ENCODE measurements at regions of chr4 and their contacts with region 1.

Region 1: GRCh38 chr4:52861879-52862616 is at the start of gene RASL11B:
- DNase-seq: peak; percentile 74
- H3K4me3 ChIP-seq: peak within 1 kb of the TSS; percentile 59 to 71 (median 62)
- H3K27ac ChIP-seq: no peak within 1 kb of the TSS
- H3K4me1 ChIP-seq: peaks cover 11% of the 10 kb centered on the region
- H3K27me3 ChIP-seq: no peaks in the 10 kb centered on the region
- CTCF ChIP-seq: no peak
- total RNA-seq, gene RASL11B: 2.4 to 3.5 TPM

Region 2: GRCh38 chr4:52791946-52792345 is 70.1 kb before region 1 on chr4:
- CTCF ChIA-PET with region 1: no interaction called
- dilution Hi-C with region 1: no loop called
- in situ Hi-C with region 1: no loop called
- intact Hi-C with region 1: loop called (anchors 5 kb)
- DNase-seq: no peak
- H3K4me3 ChIP-seq: no peak overlapping the region
- H3K27ac ChIP-seq: no peak overlapping the region
- H3K4me1 ChIP-seq: no peaks in the 10 kb centered on the region
- H3K27me3 ChIP-seq: no peaks in the 10 kb centered on the region
- CTCF ChIP-seq: no peak

Region 3: DNA sequence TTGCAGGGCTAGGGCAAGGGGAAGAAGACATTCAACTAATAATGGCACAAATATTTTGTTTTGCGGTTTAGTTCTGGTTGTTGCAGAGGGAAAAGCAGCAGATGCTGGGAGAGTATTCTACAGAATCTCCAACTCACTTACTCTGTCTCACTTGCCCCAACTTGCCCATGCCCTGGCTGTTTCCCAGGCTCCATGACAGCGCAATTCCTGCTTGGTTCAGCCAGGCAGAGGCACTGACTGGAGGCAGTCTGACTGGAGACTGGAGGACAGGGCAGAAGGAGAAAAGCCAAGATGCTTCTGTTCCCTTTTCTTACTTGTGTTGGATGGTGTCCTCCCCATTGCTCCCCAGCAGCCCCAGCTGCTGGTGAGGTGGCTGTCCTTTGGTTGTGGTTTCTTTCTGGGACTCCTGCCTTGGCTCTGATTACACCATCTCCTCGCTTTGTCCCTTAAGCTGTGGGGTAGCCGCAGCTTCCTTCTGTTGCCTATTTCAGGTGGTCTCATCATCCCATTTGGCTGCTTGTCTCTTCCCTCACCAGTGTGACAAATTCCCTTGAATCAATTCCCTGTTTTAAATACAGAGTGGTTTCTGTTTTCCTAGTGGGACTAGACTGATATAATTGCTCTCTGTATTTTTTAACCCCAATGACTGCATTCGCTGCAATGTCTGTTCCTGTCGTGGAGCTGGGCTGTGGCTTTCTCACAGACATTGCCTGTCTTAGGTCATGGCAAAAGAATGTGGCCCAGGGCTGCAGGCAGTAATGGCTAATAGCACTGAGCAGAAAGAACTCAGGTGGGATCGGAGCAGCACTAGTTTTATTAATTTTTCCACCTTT is 24.1 kb before region 1 on chr4:
- CTCF ChIA-PET with region 1: no interaction called
- dilution Hi-C with region 1: no loop called
- in situ Hi-C with region 1: no loop called
- intact Hi-C with region 1: loop called (anchors 2 kb)
- DNase-seq: peak; percentile 97
- H3K4me3 ChIP-seq: peak overlapping the region; percentile 9 to 32 (median 9)
- H3K27ac ChIP-seq: peak overlapping the region; percentile 99
- H3K4me1 ChIP-seq: peaks cover 57% of the 10 kb centered on the region
- H3K27me3 ChIP-seq: no peaks in the 10 kb centered on the region
- CTCF ChIP-seq: no peak

Region 4: DNA sequence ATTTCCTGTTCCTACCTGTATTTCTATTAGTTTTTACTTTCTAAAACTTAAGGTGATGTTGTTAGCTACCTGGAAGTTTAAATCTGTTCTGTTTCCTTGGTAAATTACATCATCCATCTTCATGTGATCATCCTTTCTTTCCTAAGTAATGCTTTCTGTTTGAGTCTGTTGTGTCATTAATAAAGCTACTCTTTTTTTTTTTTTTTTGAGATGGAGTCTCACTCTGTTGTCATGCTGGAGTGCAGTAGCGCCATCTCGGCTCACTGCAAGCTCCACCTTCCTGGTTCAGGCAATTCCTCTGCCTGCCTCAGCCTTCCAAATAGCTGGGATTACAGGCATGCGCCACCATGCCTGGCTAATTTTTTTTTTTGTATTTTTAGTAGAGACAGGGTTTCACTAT is 588.7 kb after region 1 on chr4:
- CTCF ChIA-PET with region 1: no interaction called
- dilution Hi-C with region 1: no loop called
- in situ Hi-C with region 1: no loop called
- intact Hi-C with region 1: no loop called
- DNase-seq: peak; percentile 35
- H3K4me3 ChIP-seq: no peak overlapping the region
- H3K27ac ChIP-seq: no peak overlapping the region
- H3K4me1 ChIP-seq: no peaks in the 10 kb centered on the region
- H3K27me3 ChIP-seq: no peaks in the 10 kb centered on the region
- CTCF ChIP-seq: no peak